ENCODE measurements at regions of chr3 and their contacts with region 1.

Region 1: GRCh38 chr3:101588616-101589015 is 14.6 kb downstream of the PCNP start:
- DNase-seq: no peak
- ATAC-seq: no peak
- H3K4me3 ChIP-seq: no peak overlapping the region
- H3K27ac ChIP-seq: no peak overlapping the region
- H3K4me1 ChIP-seq: no peaks in the 10 kb centered on the region
- H3K27me3 ChIP-seq: no peaks in the 10 kb centered on the region
- CTCF ChIP-seq: no peak
- POLR2A ChIP-seq: no peak
- RAD21 ChIP-seq: no peak

Region 2: DNA sequence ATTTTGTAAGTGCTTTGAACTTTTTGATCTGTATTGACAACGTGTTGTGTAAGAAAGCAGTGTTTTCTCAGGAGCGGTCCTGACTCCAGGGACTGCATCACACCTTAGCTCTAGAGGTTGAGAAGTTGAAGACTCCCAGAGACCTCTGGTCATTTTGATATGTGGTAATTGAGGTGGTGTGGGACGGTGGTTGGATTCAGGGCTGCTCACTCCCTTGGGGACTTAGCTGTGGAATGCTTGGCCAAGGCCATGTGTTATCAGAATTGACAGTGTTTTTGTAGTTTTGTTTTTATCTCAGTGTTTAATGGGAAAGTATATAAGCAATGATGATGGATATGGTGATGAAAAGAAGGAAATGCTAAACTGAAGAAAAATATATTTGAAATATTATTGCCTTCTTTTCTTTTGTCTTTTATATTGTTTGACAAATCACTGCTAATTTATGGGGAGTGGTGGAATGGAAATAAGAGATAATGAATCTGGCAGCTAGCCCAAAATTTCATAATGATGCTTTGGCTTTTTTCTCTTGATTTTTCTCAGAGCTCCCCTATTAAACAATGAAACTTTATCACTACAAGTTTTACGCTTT is 1754.9 kb before region 1 on chr3:
- CTCF ChIA-PET with region 1: no interaction called
- POLR2A ChIA-PET with region 1: no interaction called
- dilution Hi-C with region 1: no loop called
- in situ Hi-C with region 1: no loop called
- intact Hi-C with region 1: no loop called
- DNase-seq: no peak
- ATAC-seq: no peak
- H3K4me3 ChIP-seq: no peak overlapping the region
- H3K27ac ChIP-seq: no peak overlapping the region
- H3K4me1 ChIP-seq: peaks cover 2% of the 10 kb centered on the region; the same call in 1 of the 2 replicates
- H3K27me3 ChIP-seq: no peaks in the 10 kb centered on the region
- CTCF ChIP-seq: no peak
- POLR2A ChIP-seq: no peak
- RAD21 ChIP-seq: no peak

Region 3: GRCh38 chr3:101061312-101061711 is 527.3 kb before region 1 on chr3:
- CTCF ChIA-PET with region 1: no interaction called
- POLR2A ChIA-PET with region 1: no interaction called
- dilution Hi-C with region 1: no loop called
- in situ Hi-C with region 1: no loop called
- intact Hi-C with region 1: no loop called
- DNase-seq: no peak
- ATAC-seq: no peak
- H3K4me3 ChIP-seq: no peak overlapping the region
- H3K27ac ChIP-seq: no peak overlapping the region
- H3K4me1 ChIP-seq: peaks cover 4% of the 10 kb centered on the region; the same call in 1 of the 2 replicates
- H3K27me3 ChIP-seq: no peaks in the 10 kb centered on the region
- CTCF ChIP-seq: no peak
- POLR2A ChIP-seq: no peak
- RAD21 ChIP-seq: no peak

Region 4: DNA sequence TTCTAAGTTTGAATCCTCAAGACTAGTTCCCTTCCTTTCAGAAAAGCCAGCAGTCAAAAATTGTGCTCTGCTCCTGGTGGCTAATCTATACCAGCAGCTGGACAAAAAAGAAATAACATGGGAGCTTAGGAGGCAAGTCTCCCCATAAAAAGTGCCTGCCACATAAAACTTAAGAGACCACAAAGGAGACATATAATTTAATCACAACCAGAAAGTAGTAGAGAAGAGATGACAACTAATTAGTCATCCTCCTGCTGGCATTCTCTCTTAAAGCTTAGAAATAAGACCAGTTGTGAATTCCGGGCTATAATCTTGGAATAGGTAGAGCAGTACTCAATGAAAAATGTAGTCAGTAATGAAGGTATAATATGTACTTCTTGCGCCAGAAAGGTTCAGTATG is 248.0 kb before region 1 on chr3:
- CTCF ChIA-PET with region 1: no interaction called
- POLR2A ChIA-PET with region 1: interaction called, 10 read pairs
- dilution Hi-C with region 1: no loop called
- in situ Hi-C with region 1: no loop called
- intact Hi-C with region 1: no loop called
- DNase-seq: peak; percentile 2
- ATAC-seq: no peak
- H3K4me3 ChIP-seq: no peak overlapping the region
- H3K27ac ChIP-seq: no peak overlapping the region
- H3K4me1 ChIP-seq: no peaks in the 10 kb centered on the region
- H3K27me3 ChIP-seq: no peaks in the 10 kb centered on the region
- CTCF ChIP-seq: no peak
- POLR2A ChIP-seq: no peak
- RAD21 ChIP-seq: no peak

Region 5: GRCh38 chr3:101414121-101414520 is 174.5 kb before region 1 on chr3:
- CTCF ChIA-PET with region 1: no interaction called
- POLR2A ChIA-PET with region 1: interaction called, 14 read pairs
- dilution Hi-C with region 1: no loop called
- in situ Hi-C with region 1: no loop called
- intact Hi-C with region 1: no loop called
- DNase-seq: no peak
- ATAC-seq: no peak
- H3K4me3 ChIP-seq: no peak overlapping the region
- H3K27ac ChIP-seq: no peak overlapping the region
- H3K4me1 ChIP-seq: no peaks in the 10 kb centered on the region
- H3K27me3 ChIP-seq: no peaks in the 10 kb centered on the region
- CTCF ChIP-seq: no peak
- POLR2A ChIP-seq: no peak
- RAD21 ChIP-seq: no peak

Region 6: GRCh38 chr3:101423984-101424888 is 164.4 kb before region 1 on chr3:
- CTCF ChIA-PET with region 1: no interaction called
- POLR2A ChIA-PET with region 1: no interaction called
- dilution Hi-C with region 1: no loop called
- in situ Hi-C with region 1: no loop called
- intact Hi-C with region 1: no loop called
- DNase-seq: no peak
- ATAC-seq: no peak
- H3K4me3 ChIP-seq: no peak overlapping the region
- H3K27ac ChIP-seq: no peak overlapping the region
- H3K4me1 ChIP-seq: no peaks in the 10 kb centered on the region
- H3K27me3 ChIP-seq: no peaks in the 10 kb centered on the region
- CTCF ChIP-seq: no peak
- POLR2A ChIP-seq: no peak
- RAD21 ChIP-seq: no peak

Region 7: GRCh38 chr3:101913173-101913572 is 324.6 kb after region 1 on chr3:
- CTCF ChIA-PET with region 1: no interaction called
- POLR2A ChIA-PET with region 1: no interaction called
- dilution Hi-C with region 1: no loop called
- in situ Hi-C with region 1: no loop called
- intact Hi-C with region 1: no loop called
- DNase-seq: peak; percentile 70
- ATAC-seq: no peak
- H3K4me3 ChIP-seq: no peak overlapping the region
- H3K27ac ChIP-seq: no peak overlapping the region
- H3K4me1 ChIP-seq: no peaks in the 10 kb centered on the region; the same call in 1 of the 2 replicates
- H3K27me3 ChIP-seq: no peaks in the 10 kb centered on the region
- CTCF ChIP-seq: no peak
- POLR2A ChIP-seq: no peak
- RAD21 ChIP-seq: no peak

Measured in IMR-90 (cell line).